IMR-90 (cell line): ENCODE measurements at regions of chr4 and their contacts with region 1.

Region 1: GRCh38 chr4:76977736-76978350 is 28.3 kb downstream of the SEPTIN11 start:
- DNase-seq: peak; percentile 87
- ATAC-seq: peak; percentile 74
- H3K4me3 ChIP-seq: no peak overlapping the region
- H3K27ac ChIP-seq: peak overlapping the region; percentile 84
- H3K4me1 ChIP-seq: peaks cover 28% of the 10 kb centered on the region
- H3K27me3 ChIP-seq: no peaks in the 10 kb centered on the region
- CTCF ChIP-seq: no peak
- POLR2A ChIP-seq: no peak
- RAD21 ChIP-seq: no peak

Region 2: GRCh38 chr4:76725036-76725435 is 252.8 kb before region 1 on chr4:
- CTCF ChIA-PET with region 1: no interaction called
- POLR2A ChIA-PET with region 1: interaction called, 11 read pairs
- dilution Hi-C with region 1: no loop called
- in situ Hi-C with region 1: no loop called
- intact Hi-C with region 1: no loop called
- DNase-seq: no peak
- ATAC-seq: no peak
- H3K4me3 ChIP-seq: no peak overlapping the region
- H3K27ac ChIP-seq: peak overlapping the region; percentile 62; the same call in 1 of the 2 replicates
- H3K4me1 ChIP-seq: peaks cover 17% of the 10 kb centered on the region
- H3K27me3 ChIP-seq: no peaks in the 10 kb centered on the region
- CTCF ChIP-seq: no peak
- POLR2A ChIP-seq: no peak
- RAD21 ChIP-seq: no peak

Region 3: GRCh38 chr4:77347341-77347966 is 369.6 kb after region 1 on chr4:
- CTCF ChIA-PET with region 1: no interaction called
- POLR2A ChIA-PET with region 1: no interaction called
- dilution Hi-C with region 1: no loop called
- in situ Hi-C with region 1: no loop called
- intact Hi-C with region 1: no loop called
- DNase-seq: no peak
- ATAC-seq: no peak
- H3K4me3 ChIP-seq: no peak overlapping the region
- H3K27ac ChIP-seq: no peak overlapping the region
- H3K4me1 ChIP-seq: no peaks in the 10 kb centered on the region
- H3K27me3 ChIP-seq: no peaks in the 10 kb centered on the region; the same call in 1 of the 2 replicates
- CTCF ChIP-seq: no peak
- POLR2A ChIP-seq: no peak
- RAD21 ChIP-seq: no peak

Region 4: GRCh38 chr4:77465271-77465670 is 487.4 kb after region 1 on chr4:
- CTCF ChIA-PET with region 1: no interaction called
- POLR2A ChIA-PET with region 1: no interaction called
- dilution Hi-C with region 1: no loop called
- in situ Hi-C with region 1: no loop called
- intact Hi-C with region 1: no loop called
- DNase-seq: no peak
- ATAC-seq: no peak
- H3K4me3 ChIP-seq: no peak overlapping the region
- H3K27ac ChIP-seq: no peak overlapping the region
- H3K4me1 ChIP-seq: no peaks in the 10 kb centered on the region
- H3K27me3 ChIP-seq: no peaks in the 10 kb centered on the region
- CTCF ChIP-seq: no peak
- POLR2A ChIP-seq: no peak
- RAD21 ChIP-seq: peak; percentile 30; the same call in 1 of the 2 replicates